ENCODE measurements at regions of chr3 and their contacts with region 1.

Region 1: DNA sequence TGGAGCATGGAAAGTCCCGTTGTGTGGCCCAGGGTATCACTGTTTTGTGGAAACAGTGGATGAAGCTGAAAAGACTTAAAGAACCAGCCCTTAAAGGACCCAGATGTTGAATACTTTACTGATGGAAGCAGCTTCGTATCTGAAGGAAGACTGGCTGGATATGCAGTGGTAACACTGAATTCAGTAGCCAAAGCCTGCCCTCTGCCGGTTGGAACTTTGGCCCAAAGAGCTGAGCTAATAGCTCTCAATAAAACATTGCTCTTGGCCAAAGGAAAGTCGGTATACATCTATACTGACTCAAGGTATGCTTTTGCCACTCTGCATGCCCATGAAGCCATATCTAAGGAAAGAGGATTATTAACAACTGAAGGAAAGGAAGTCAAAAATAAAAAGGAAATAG is 885.4 kb downstream of the PDCD6IP start:
- DNase-seq: peak; percentile 59 to 90 (median 78)
- ATAC-seq: peak; percentile 49 to 70
- H3K4me3 ChIP-seq: no peak overlapping the region
- H3K27ac ChIP-seq: no peak overlapping the region
- H3K4me1 ChIP-seq: no peaks in the 10 kb centered on the region
- H3K27me3 ChIP-seq: no peaks in the 10 kb centered on the region

Region 2: DNA sequence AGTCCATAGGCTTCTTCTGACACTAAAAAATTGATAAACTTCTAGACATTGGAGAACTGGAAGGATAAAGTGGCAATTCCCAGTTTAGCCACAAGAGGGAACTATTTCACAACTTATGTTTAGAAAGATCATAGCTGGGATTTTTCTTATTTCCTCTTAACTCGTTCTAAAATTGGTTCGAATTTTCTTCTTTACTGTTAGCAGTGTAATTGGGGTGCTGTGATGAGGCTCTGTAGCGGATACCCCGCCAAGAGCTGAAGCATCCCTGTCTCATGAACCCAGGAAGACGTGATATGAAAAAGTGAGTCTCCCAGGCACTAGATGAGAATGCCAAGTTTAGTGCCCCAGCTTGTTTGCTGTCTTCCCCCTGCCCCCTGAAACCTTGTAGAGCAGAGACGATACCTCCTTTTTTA is 800.3 kb before region 1 on chr3:
- intact Hi-C with region 1: loop called (anchors 5 to 10 kb)
- DNase-seq: no peak
- ATAC-seq: no peak
- H3K4me3 ChIP-seq: peak overlapping the region; percentile 20
- H3K27ac ChIP-seq: no peak overlapping the region
- H3K4me1 ChIP-seq: no peaks in the 10 kb centered on the region
- H3K27me3 ChIP-seq: no peaks in the 10 kb centered on the region

Region 3: DNA sequence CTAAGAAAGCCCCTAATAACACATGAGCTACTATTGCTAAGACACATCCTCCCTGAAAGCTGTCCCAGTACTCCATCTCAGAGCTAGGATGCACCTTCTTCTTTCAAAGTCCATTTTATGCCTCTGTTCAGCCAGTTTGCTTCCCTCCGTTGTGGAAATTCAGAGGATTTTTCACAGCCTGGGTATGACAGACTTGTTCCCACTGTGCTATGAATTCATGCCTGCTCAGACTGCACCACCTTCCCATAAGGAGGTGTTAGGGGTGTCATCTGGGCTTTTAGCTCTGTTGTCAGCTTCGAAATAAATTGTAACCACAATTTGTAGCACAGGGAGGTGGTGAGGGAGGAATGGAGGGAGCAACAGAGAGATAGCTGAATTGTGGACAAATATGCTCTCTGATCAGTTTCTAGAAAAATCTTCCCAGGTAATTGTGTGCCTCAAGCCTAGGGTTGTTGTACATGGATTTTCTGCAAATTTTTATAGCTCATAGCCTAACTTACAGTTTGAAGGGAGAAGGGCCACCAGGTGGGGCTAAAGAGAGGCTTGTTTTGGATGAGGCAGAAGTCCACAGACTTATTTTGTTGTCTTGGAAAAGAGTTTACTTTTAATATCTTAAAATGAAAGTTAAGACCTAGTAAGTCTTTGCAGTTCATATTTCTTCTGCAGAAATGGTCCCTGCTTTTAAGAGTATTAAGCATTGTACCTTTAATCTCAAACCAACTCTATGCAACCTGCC is 423.4 kb before region 1 on chr3:
- intact Hi-C with region 1: loop called (anchors 2 to 10 kb)
- DNase-seq: peak; percentile 38 to 74 (median 40)
- ATAC-seq: no peak
- H3K4me3 ChIP-seq: no peak overlapping the region
- H3K27ac ChIP-seq: no peak overlapping the region
- H3K4me1 ChIP-seq: peaks cover 2% of the 10 kb centered on the region
- H3K27me3 ChIP-seq: no peaks in the 10 kb centered on the region

Region 4: DNA sequence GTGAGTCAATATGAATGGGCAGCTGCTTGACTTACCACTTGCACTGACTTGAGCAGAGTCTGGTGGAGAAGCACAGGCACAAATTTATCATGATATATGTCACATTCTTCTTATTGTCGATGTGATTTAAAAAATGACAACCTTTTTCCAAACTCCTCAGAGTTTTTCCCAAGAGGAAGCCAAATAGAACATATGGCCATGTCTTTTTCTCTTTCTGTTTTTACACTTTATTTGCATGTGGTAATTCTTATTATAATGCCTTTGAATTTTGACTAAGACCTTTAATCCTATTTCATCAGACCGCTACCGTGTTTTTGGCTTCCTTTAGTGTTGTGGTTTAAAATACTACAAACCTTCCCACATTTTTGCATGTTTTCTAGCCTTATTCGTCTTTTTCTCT is 219.2 kb before region 1 on chr3:
- intact Hi-C with region 1: no loop called
- DNase-seq: no peak
- ATAC-seq: no peak
- H3K4me3 ChIP-seq: no peak overlapping the region
- H3K27ac ChIP-seq: no peak overlapping the region
- H3K4me1 ChIP-seq: no peaks in the 10 kb centered on the region
- H3K27me3 ChIP-seq: no peaks in the 10 kb centered on the region